ENCODE measurements at regions of chr1 and their contacts with region 1.

Region 1: GRCh38 chr1:89358287-89358893 is 5.5 kb upstream of the GBP6 start:
- DNase-seq: peak; percentile 86 to 91
- H3K4me3 ChIP-seq: no peak overlapping the region
- H3K27ac ChIP-seq: no peak overlapping the region
- H3K4me1 ChIP-seq: peaks cover 0 to 29% (median 16%) of the 10 kb centered on the region in 4 donors
- H3K27me3 ChIP-seq: no peaks in the 10 kb centered on the region
- CTCF ChIP-seq: peak in 5 of 7 experiments; percentile 56 to 81 (median 69)
- EP300 ChIP-seq: no peak
- POLR2A ChIP-seq: no peak

Region 2: DNA sequence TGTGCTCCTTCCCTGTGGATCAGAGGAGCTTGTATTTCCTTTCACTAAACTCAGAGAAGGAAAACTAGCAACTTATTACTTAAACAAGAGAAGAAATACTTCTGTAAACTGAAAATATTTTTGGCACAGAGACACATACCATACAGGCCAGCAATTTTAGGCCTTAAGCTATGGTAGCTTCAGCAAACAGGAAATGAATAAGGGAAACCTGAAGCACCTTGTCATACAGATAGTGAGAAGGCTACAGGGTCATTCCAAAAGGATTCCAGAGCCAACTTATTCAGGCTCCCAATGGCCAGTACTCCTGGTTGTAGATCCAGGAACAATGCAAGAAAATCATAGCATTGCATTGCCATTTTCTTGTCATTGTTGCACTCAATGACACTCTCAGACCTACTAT is 356.9 kb before region 1 on chr1:
- intact Hi-C with region 1: loop called (anchors 10 kb)
- DNase-seq: no peak
- H3K4me3 ChIP-seq: no peak overlapping the region
- H3K27ac ChIP-seq: peak overlapping the region in 1 of 5 donors; percentile 2
- H3K4me1 ChIP-seq: peaks cover 0 to 7% (median 2%) of the 10 kb centered on the region in 4 donors
- H3K27me3 ChIP-seq: no peaks in the 10 kb centered on the region
- CTCF ChIP-seq: no peak
- EP300 ChIP-seq: no peak
- POLR2A ChIP-seq: no peak

Region 3: DNA sequence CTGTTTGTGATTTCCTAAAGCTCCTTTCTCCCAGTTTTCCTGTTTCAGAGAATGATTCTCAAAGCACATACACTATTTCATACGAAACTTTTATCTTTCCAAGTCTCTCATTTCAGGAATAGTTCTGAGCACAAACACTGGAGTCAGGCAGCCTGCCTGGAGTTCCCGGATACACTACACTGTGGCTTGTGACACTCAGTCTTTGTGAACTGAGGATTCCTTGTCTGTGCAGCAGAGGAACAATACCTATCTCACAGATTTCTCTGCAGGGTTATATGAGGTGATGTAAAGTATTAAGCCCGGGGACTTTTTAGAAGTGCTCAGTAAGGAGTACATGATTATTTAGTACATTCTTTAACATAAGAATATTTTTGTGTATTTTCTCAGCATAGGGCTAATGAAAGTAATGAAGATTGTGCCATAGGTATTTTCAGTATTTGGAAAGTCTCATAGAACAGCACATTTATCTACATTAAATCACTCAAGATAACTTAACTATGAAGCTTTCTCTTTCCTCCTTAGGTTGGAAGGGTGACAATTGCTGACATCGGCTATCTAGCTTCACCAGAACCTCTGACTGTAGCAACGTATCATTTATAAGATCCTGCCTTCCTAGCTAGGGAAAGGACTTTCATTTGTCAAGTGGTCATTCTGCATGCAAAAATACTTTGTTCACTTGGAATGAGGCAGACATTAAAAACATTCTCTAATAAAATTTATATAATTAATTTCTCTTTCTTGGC is 245.3 kb before region 1 on chr1:
- intact Hi-C with region 1: loop called (anchors 10 kb)
- DNase-seq: no peak
- H3K4me3 ChIP-seq: no peak overlapping the region
- H3K27ac ChIP-seq: peak overlapping the region in 1 of 5 donors; percentile 7
- H3K4me1 ChIP-seq: no peaks in the 10 kb centered on the region
- H3K27me3 ChIP-seq: no peaks in the 10 kb centered on the region
- CTCF ChIP-seq: no peak
- EP300 ChIP-seq: no peak
- POLR2A ChIP-seq: no peak

Measured in stomach (tissue), 19 donors.